PC-9 (cell line): ENCODE measurements at regions of chr4 and their contacts with region 1.

Region 1: DNA sequence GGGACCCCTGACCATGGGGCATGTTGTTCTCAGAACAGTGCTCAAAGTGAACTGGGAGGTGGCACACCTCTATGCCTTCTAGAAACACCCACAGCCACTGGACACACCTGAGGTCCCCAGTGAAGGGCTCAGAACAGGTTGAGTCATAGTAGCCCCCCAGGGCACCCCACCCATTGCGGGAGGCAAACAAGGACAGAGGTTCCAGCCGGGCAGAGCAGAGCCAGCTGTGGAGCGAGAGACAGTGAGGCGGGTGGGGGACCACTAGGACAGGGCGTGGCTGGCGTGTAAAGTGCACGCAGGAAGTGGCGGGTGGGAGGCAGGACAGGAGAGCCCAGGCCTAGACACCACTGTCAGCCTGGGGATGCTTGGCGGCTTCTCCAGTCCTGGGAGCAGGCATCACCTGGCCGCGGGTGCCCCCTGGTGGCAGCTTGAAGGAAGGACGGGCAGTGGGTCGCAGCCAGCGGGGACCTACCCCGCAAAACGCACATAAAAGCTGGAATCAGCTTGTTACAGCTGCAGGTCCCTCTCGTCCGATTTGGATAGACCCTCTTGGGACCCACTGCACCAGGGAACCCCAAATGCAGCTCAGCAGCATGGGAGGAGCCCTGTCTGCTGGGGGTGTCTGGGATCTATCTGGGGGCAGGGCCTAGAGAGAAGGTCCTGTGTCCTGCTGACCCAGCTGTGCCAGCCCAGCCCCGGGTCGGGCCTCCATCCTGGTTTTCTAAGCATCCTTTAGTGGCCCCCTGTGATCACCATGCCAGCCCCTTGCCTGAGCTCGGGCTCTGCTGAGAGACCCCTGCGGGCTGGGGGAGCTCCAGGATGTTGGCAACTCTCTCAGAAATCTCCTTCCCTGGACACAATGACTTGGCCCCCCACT is 57.6 kb downstream of the WFS1 start:
- DNase-seq: peak in 1 of 2 experiments; percentile 80
- H3K4me3 ChIP-seq: no peak overlapping the region
- H3K27ac ChIP-seq: no peak overlapping the region
- H3K4me1 ChIP-seq: 0 out of 2 replicates have a peak, but pooled peaks cover 3% of the 10 kb centered on the region
- H3K27me3 ChIP-seq: no peaks in the 10 kb centered on the region
- CTCF ChIP-seq: peak; percentile 84

Region 2: DNA sequence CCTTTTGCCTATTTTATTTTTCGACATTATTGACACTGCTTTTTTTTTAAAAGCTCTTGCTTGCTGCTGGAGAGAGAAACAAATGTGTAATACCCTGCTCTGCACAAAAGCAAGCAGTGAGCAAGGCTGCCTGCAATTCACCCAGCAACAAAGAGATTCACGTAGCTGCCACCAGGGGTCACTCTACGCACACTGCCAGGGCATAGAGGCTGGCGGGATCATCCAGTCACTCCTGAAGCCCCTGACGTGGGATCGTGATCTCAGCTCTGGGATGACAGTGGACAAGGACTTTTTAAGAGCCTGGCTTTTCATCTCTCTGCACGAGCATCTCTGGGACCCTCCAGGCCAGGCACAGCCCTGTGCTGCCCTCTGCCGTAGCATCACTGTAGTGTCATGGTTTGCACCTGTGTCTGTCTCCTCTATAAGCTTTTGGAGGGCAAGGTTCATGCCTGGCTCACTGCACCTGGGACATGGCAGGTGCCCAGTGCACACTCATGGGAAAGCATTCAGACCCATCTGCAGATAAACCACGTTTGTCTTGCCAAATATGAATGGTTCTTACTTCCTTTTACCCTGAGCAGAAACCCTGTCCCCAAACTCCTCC is 328.8 kb before region 1 on chr4:
- CTCF ChIA-PET with region 1: interaction called, 3 read pairs
- POLR2A ChIA-PET with region 1: no interaction called
- intact Hi-C with region 1: loop called (anchors 1 kb)
- DNase-seq: peak in 1 of 2 experiments; percentile 58
- H3K4me3 ChIP-seq: no peak overlapping the region
- H3K27ac ChIP-seq: no peak overlapping the region
- H3K4me1 ChIP-seq: no peaks in the 10 kb centered on the region
- H3K27me3 ChIP-seq: peaks cover 36% of the 10 kb centered on the region
- CTCF ChIP-seq: peak; percentile 87

Region 3: DNA sequence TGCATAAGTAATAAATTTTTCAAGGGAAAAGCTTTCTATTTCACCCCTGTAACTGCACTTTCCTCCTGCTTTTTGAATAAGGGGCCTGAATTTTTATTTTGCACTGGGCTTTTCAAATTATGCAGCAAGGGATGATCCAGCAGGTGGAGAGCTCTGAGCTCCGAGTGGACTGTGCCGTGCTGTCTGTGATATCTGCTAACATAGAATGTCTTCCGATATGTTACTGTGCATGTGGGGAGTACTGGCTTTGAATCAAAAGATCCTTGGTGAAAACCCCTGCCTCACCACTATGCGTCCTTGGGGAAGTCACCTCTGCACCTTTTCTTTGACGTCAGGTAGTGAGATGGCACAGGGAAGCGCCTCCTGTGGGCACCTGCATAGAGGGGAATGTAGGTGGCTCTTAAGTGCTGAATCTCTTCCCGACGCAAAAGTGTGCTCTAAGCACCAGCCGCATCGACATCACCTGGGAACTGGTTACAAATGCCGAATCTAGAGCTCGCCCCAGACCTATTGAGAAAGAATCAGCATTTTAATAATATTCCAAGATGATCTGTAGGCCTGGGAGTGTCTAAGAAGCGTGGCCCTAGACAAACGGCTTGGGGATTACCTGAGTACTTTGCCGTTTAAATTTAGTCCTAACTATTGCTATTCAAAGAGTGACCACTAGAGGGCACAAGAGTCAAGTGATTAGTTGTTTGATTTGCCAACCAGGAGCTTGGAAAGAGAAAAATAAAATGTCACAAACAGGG is 76.9 kb before region 1 on chr4:
- CTCF ChIA-PET with region 1: interaction called, 25 read pairs
- POLR2A ChIA-PET with region 1: no interaction called
- intact Hi-C with region 1: loop called (anchors 1 kb)
- DNase-seq: peak; percentile 22 to 59
- H3K4me3 ChIP-seq: no peak overlapping the region
- H3K27ac ChIP-seq: no peak overlapping the region
- H3K4me1 ChIP-seq: no peaks in the 10 kb centered on the region
- H3K27me3 ChIP-seq: peaks cover 38% of the 10 kb centered on the region; the same call in 1 of the 2 replicates
- CTCF ChIP-seq: peak; percentile 86

Region 4: GRCh38 chr4:6264225-6264540 is 63.1 kb before region 1 on chr4:
- CTCF ChIA-PET with region 1: interaction called, 18 read pairs
- POLR2A ChIA-PET with region 1: no interaction called
- intact Hi-C with region 1: loop called (anchors 1 kb)
- DNase-seq: peak in 1 of 2 experiments; percentile 57
- H3K4me3 ChIP-seq: no peak overlapping the region
- H3K27ac ChIP-seq: no peak overlapping the region
- H3K4me1 ChIP-seq: peaks cover 6% of the 10 kb centered on the region; the same call in 1 of the 2 replicates
- H3K27me3 ChIP-seq: 0 out of 2 replicates have a peak, but pooled peaks cover 3% of the 10 kb centered on the region
- CTCF ChIP-seq: peak; percentile 57

Region 5: GRCh38 chr4:6308899-6309643 is 18.2 kb before region 1 on chr4:
- CTCF ChIA-PET with region 1: interaction called, 3 read pairs
- POLR2A ChIA-PET with region 1: no interaction called
- intact Hi-C with region 1: loop called (anchors 2 kb)
- DNase-seq: peak in 1 of 2 experiments; percentile 50
- H3K4me3 ChIP-seq: no peak overlapping the region
- H3K27ac ChIP-seq: no peak overlapping the region
- H3K4me1 ChIP-seq: peaks cover 10% of the 10 kb centered on the region
- H3K27me3 ChIP-seq: no peaks in the 10 kb centered on the region
- CTCF ChIP-seq: no peak

Region 6: DNA sequence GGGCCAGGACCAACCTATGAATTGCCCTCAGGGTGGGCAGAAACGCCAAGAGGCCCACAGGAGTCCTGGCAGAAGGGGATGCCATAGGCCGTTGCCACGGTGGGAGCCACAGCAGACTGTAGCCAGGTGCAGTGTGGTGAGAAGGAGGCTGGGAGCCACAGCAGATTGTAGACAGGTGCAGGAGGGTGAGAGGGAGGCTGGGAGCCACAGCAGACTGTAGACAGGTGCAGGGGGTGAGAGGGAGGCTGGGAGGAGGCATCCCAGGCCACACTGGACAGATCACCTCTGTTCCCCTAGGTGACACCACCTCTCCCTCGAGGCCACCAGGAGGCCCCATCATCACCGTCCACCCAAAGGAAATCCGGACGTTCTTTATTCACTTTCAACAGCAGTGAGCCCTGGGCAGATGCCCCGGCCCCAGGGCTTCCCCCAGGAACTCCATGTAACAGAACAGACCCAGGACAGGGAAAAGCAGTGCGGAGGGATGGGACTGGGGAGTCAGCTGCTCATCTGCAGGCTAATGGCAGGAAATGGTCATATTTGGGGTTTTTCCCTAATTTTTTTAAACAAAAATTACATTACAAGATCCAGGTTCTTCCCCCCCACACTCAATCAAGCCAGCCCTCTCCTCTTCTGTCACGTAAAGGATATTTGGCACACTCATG is 293.7 kb after region 1 on chr4:
- CTCF ChIA-PET with region 1: interaction called, 13 read pairs
- POLR2A ChIA-PET with region 1: no interaction called
- intact Hi-C with region 1: no loop called
- DNase-seq: no peak
- H3K4me3 ChIP-seq: no peak overlapping the region
- H3K27ac ChIP-seq: no peak overlapping the region
- H3K4me1 ChIP-seq: peaks cover 7% of the 10 kb centered on the region; the same call in 1 of the 2 replicates
- H3K27me3 ChIP-seq: no peaks in the 10 kb centered on the region
- CTCF ChIP-seq: no peak